IMR-90 (cell line): ENCODE measurements at regions of chr13 and their contacts with region 1.

Region 1: DNA sequence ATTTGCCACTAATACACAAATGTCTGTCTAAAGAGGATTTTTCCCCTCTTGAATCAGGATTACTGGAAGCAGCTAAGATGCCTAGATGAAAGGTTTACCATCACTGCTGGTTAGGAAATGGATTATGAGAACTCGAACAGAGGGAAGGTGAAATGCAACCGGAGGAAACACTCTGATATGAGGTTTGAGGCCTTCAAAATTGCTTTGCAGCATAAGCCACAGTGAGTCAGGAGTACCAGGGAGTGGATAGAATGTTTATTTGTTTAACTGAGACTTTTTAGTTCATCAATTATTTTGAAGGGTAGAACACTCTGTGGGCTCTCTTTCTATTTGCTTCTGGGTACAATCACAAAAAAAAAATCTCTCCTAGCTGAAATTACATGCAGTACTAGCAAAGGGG is 18.1 kb downstream of the CDADC1 start:
- DNase-seq: peak; percentile 77
- ATAC-seq: peak; percentile 72; the same call in 1 of the 2 replicates
- H3K4me3 ChIP-seq: no peak overlapping the region
- H3K27ac ChIP-seq: no peak overlapping the region
- H3K4me1 ChIP-seq: no peaks in the 10 kb centered on the region; the same call in 1 of the 2 replicates
- H3K27me3 ChIP-seq: no peaks in the 10 kb centered on the region
- CTCF ChIP-seq: no peak
- POLR2A ChIP-seq: no peak
- RAD21 ChIP-seq: no peak

Region 2: DNA sequence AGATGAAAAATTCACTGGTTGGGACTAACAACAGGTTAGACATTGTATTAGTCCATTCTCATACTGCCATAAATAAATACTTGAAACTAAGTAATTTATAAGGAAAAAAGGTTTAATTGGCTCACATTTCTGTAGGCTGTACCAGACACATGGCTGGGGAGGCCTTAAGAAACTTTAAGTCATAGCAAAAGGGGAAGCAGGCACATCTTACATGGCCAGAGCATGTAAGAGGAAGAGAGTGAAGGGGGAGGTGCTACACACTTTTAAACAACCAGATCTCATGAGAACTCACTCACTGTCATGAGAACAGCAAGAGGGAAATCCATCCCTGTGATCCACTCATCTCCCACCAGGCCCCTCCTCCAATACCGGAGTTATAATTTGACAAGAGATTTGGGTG is 1390.6 kb before region 1 on chr13:
- CTCF ChIA-PET with region 1: no interaction called
- POLR2A ChIA-PET with region 1: no interaction called
- dilution Hi-C with region 1: no loop called
- in situ Hi-C with region 1: no loop called
- intact Hi-C with region 1: no loop called
- DNase-seq: no peak
- ATAC-seq: no peak
- H3K4me3 ChIP-seq: no peak overlapping the region
- H3K27ac ChIP-seq: no peak overlapping the region
- H3K4me1 ChIP-seq: no peaks in the 10 kb centered on the region
- H3K27me3 ChIP-seq: peaks cover 6% of the 10 kb centered on the region
- CTCF ChIP-seq: no peak
- POLR2A ChIP-seq: no peak
- RAD21 ChIP-seq: no peak

Region 3: GRCh38 chr13:49428051-49428763 is 162.4 kb after region 1 on chr13:
- CTCF ChIA-PET with region 1: no interaction called
- POLR2A ChIA-PET with region 1: interaction called, 12 read pairs
- dilution Hi-C with region 1: no loop called
- in situ Hi-C with region 1: no loop called
- intact Hi-C with region 1: no loop called
- DNase-seq: no peak
- ATAC-seq: no peak; the same call in 1 of the 2 replicates
- H3K4me3 ChIP-seq: no peak overlapping the region
- H3K27ac ChIP-seq: no peak overlapping the region
- H3K4me1 ChIP-seq: no peaks in the 10 kb centered on the region
- H3K27me3 ChIP-seq: no peaks in the 10 kb centered on the region
- CTCF ChIP-seq: no peak
- POLR2A ChIP-seq: no peak
- RAD21 ChIP-seq: no peak